H1 (cell line): ENCODE measurements at regions of chr13 and their contacts with region 1.

Region 1: DNA sequence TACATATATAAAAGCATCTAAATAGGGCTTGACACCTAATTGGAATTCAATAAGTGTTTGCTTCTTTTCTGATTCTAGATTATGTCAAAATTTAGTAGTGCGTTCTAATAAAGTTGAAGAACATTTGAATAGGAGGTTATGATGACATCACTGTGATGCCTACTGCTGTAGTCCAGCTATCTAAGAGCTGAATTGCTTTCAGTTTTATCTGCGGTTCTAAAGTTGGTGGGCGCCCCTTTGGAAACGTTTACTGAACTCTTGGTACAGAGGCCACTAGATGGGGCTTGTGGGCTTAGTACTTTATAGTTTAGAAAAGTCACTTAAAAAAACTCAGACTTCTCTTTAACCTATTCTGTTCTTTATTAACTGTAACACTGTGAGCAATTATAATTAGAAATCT is 776.9 kb downstream of the GPC5 start:
- DNase-seq: no peak
- H3K4me3 ChIP-seq: no peak overlapping the region
- H3K27ac ChIP-seq: no peak overlapping the region
- H3K4me1 ChIP-seq: no peaks in the 10 kb centered on the region
- H3K27me3 ChIP-seq: no peaks in the 10 kb centered on the region
- CTCF ChIP-seq: peak in 2 of 3 experiments; percentile 36 to 40; a peak in 2 of 4 replicates
- EP300 ChIP-seq: no peak
- POLR2A ChIP-seq: no peak
- RAD21 ChIP-seq: peak; percentile 52 to 68

Region 2: GRCh38 chr13:92187378-92187989 is 12.2 kb after region 1 on chr13:
- CTCF ChIA-PET with region 1: interaction called, 16 read pairs
- POLR2A ChIA-PET with region 1: no interaction called
- DNase-seq: no peak
- H3K4me3 ChIP-seq: no peak overlapping the region
- H3K27ac ChIP-seq: no peak overlapping the region
- H3K4me1 ChIP-seq: no peaks in the 10 kb centered on the region
- H3K27me3 ChIP-seq: no peaks in the 10 kb centered on the region
- CTCF ChIP-seq: peak in 2 of 3 experiments; percentile 60 to 76; a peak in 3 of 4 replicates
- EP300 ChIP-seq: no peak
- POLR2A ChIP-seq: no peak
- RAD21 ChIP-seq: peak; percentile 87